ENCODE measurements at regions of chr14 and their contacts with region 1.

Region 1: GRCh38 chr14:36070031-36070719 is 106.3 kb downstream of the PTCSC3 start:
- DNase-seq: peak; percentile 78
- H3K4me3 Mint-ChIP-seq: peak overlapping the region; percentile 54
- H3K27ac Mint-ChIP-seq: peak overlapping the region; percentile 91
- H3K4me1 Mint-ChIP-seq: peaks cover 20% of the 10 kb centered on the region
- H3K27me3 Mint-ChIP-seq: no peaks in the 10 kb centered on the region
- CTCF ChIP-seq: peak; percentile 73

Region 2: DNA sequence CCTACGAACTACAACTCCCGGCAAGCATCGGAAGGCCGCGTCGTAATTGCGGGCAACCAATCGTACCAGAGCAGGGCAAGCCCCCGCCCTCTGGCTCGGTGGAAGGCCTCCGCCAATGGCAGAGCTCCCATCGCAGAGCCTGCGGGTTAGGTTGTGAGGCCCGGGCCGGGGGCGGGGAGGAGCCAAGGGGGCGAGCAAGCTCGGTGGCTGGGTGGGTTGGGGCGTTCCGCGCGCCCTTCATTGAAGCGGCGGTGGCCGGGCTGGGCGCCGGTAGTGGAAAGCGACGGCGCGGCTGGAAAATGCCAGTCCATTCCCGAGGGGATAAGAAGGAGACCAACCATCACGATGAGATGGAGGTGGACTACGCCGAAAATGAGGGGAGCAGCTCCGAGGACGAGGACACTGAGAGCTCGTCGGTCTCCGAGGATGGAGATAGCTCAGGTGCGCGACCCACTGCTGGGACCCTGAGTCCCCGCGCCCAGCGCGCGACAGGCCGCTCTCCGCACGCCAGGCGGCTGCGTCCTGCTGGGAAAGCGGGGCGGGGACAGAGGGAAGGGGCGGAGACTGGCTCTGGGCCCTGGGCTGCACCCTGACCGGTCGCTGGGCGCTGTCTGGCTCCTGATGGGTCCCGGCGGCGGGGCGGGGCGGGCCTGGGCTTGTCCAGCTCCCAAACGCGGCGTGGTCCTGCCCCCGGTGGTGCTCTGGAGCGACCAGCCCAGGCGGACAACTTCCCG is 243.8 kb before region 1 on chr14 and contains the start of gene BRMS1L:
- CTCF ChIA-PET with region 1: interaction called, 3 read pairs
- intact Hi-C with region 1: loop called (anchors 5 kb)
- DNase-seq: peak; percentile 97
- H3K4me3 Mint-ChIP-seq: peak within 1 kb of the TSS; percentile 78
- H3K27ac Mint-ChIP-seq: peak within 1 kb of the TSS; percentile 77
- H3K4me1 Mint-ChIP-seq: peaks cover 11% of the 10 kb centered on the region
- H3K27me3 Mint-ChIP-seq: no peaks in the 10 kb centered on the region
- CTCF ChIP-seq: no peak
- total RNA-seq, gene BRMS1L: 10.5 and 10.6 TPM in 2 replicates

Region 3: DNA sequence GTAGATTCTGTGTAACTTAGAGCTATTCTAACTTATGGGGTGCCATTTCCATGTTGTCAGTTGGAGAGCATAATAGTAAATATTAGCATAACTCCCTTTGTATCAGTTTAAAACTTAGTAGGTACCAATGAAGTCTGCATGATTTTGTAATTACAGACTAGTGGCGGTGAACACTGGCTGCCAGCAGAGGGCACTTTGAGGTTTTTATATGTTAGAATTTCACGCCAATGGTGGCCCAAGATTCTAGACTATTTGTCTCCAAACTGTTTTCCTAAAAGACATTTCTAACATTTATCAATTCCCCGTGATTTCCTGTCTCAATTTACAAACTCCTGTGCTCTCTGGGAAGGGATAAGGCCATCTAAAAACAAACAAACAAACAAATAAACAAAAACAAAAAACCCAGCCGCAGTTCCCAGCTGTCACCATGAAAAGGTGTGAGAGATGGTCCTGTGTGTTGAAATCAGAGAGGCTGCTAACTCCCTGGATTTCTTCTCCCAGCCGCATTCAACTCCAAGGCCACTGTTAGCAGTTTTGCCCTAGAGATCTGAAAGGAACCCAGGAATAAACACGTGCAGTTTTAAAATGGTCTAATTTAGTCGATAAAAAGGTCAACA is 186.4 kb before region 1 on chr14:
- CTCF ChIA-PET with region 1: interaction called, 30 read pairs
- intact Hi-C with region 1: loop called (anchors 1 kb)
- DNase-seq: peak; percentile 37
- H3K4me3 Mint-ChIP-seq: no peak overlapping the region
- H3K27ac Mint-ChIP-seq: no peak overlapping the region
- H3K4me1 Mint-ChIP-seq: peaks cover 8% of the 10 kb centered on the region
- H3K27me3 Mint-ChIP-seq: no peaks in the 10 kb centered on the region
- CTCF ChIP-seq: peak; percentile 58

Region 4: GRCh38 chr14:36048667-36049066 is 21.5 kb before region 1 on chr14:
- CTCF ChIA-PET with region 1: interaction called, 13 read pairs
- intact Hi-C with region 1: no loop called
- DNase-seq: no peak
- H3K4me3 Mint-ChIP-seq: no peak overlapping the region
- H3K27ac Mint-ChIP-seq: no peak overlapping the region
- H3K4me1 Mint-ChIP-seq: no peaks in the 10 kb centered on the region
- H3K27me3 Mint-ChIP-seq: peaks cover 15% of the 10 kb centered on the region
- CTCF ChIP-seq: no peak

Region 5: GRCh38 chr14:36207500-36207899 is 137.3 kb after region 1 on chr14:
- CTCF ChIA-PET with region 1: no interaction called
- intact Hi-C with region 1: loop called (anchors 2 kb)
- DNase-seq: no peak
- H3K4me3 Mint-ChIP-seq: no peak overlapping the region
- H3K27ac Mint-ChIP-seq: no peak overlapping the region
- H3K4me1 Mint-ChIP-seq: no peaks in the 10 kb centered on the region
- H3K27me3 Mint-ChIP-seq: no peaks in the 10 kb centered on the region
- CTCF ChIP-seq: peak; percentile 12

Region 6: GRCh38 chr14:36221112-36221511 is 150.9 kb after region 1 on chr14:
- CTCF ChIA-PET with region 1: no interaction called
- intact Hi-C with region 1: no loop called
- DNase-seq: no peak
- H3K4me3 Mint-ChIP-seq: no peak overlapping the region
- H3K27ac Mint-ChIP-seq: no peak overlapping the region
- H3K4me1 Mint-ChIP-seq: peaks cover 29% of the 10 kb centered on the region
- H3K27me3 Mint-ChIP-seq: no peaks in the 10 kb centered on the region
- CTCF ChIP-seq: no peak

Region 7: DNA sequence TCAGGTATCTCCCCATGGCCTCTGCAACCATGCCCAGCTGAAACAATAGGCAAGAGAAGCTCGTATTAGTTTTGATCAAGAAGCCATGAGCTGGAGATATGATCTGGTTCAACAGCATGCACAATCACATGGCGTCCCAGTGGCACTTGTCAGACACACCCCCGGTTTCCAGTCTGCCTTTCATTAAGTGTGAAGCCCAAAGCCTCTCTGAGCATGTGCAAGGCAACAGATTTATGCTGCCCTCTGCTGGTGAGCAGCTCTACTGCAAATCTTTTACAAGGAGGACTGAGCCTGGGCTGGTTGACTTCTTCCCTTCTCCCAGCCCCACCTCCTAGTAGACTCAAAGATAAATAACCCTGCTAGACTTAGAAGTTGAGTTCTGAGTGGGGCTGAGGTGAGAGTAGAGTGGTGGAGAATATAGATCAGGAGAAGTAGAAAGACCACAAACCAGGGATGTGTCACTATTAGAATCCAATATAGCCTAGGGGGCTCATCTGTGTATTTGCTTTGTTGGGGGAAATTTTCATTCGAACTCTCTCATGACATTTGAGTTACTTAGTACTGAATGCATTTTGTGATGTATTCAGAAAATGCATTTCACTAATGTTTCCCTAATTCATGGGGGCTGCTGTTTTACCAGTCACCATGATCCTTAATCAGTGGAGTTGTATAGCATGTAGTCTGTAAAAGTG is 304.0 kb after region 1 on chr14:
- CTCF ChIA-PET with region 1: interaction called, 36 read pairs
- intact Hi-C with region 1: loop called (anchors 1 kb)
- DNase-seq: peak; percentile 82
- H3K4me3 Mint-ChIP-seq: no peak overlapping the region
- H3K27ac Mint-ChIP-seq: no peak overlapping the region
- H3K4me1 Mint-ChIP-seq: peaks cover 8% of the 10 kb centered on the region
- H3K27me3 Mint-ChIP-seq: peaks cover 18% of the 10 kb centered on the region
- CTCF ChIP-seq: peak; percentile 66

Measured in Calu3 (cell line).